Right ventricle myocardium inferior (tissue), 1 donor: ENCODE measurements at regions of chr12 and their contacts with region 1.

Region 1: DNA sequence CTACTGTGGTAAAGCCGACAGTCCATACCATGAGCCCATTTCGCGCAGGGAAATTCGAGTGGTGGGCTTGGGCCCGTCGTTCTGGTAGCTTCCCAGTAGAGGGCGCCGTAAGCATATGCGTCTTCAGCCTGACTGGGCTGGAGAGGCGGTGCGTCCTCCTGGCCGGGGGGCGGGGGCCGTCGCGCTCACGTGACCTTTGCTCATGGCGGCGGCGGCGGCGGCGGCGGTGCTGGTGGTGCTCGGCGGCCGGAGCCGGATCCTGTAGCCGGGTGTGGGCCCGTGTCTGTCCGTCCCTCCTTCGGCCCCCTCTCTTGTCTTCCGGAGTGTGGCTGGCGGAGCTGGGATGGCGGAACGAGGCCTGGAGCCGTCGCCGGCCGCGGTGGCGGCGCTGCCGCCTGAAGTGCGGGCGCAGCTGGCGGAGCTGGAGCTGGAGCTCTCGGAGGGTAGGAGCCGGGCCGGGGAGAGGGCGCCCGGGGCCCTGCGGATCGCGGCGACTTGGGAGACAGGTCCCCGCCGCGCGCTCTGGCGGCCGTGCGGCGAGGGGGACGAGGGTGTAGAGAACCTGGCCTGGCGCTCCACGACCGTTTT is at the start of gene DIP2B:
- DNase-seq: peak; percentile 99
- ATAC-seq: peak; percentile 97
- total RNA-seq, gene DIP2B: 9.4 TPM

Region 2: DNA sequence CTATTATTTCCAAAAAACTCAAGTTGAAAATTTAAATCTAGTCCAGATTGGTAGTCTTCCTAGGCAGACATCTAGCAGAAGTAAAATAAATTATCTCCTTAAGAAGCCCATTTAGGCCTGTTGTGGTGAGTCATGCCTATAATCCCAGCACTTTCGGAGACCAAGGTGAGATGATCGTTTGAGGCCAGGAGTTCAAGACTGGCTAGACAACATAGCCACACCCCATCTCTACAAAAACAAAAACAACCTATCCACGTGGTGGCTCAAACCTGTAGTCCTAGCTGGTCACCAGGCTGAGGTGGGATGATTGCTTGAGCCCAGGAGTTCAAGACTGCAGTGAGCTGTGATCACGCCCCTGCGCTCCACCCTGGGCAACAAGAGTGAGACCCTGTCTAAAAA is 85.4 kb before region 1 on chr12:
- intact Hi-C with region 1: no loop called
- DNase-seq: no peak
- ATAC-seq: no peak

Region 3: DNA sequence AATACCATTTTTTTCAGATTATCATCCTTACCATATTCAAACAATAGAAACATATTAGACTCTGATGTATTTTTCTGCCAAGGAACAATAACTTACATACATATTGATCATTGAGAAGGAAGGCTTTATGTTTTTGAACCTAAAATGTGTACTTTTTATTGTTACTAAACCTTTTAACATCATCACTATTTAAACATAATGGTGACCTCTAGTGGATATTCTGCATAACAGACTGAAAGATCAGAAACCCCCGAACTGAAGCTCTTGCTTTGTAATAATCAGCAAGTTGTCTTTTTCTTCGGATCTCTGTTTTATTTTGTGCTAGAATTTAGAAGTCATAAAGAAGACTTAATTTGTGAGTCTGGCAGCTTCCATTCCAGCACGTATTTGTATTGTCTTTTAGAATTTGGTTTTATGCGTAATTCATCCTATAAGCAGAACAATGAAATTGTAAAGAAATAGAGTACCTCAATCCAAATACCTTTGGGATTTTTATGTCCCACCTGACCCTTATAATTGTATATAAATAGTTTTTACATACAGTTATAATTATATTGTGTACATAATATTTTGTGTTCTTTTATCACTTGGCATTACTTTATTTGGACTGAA is 133.1 kb after region 1 on chr12:
- intact Hi-C with region 1: loop called (anchors 1 kb)
- DNase-seq: no peak
- ATAC-seq: no peak

Region 4: DNA sequence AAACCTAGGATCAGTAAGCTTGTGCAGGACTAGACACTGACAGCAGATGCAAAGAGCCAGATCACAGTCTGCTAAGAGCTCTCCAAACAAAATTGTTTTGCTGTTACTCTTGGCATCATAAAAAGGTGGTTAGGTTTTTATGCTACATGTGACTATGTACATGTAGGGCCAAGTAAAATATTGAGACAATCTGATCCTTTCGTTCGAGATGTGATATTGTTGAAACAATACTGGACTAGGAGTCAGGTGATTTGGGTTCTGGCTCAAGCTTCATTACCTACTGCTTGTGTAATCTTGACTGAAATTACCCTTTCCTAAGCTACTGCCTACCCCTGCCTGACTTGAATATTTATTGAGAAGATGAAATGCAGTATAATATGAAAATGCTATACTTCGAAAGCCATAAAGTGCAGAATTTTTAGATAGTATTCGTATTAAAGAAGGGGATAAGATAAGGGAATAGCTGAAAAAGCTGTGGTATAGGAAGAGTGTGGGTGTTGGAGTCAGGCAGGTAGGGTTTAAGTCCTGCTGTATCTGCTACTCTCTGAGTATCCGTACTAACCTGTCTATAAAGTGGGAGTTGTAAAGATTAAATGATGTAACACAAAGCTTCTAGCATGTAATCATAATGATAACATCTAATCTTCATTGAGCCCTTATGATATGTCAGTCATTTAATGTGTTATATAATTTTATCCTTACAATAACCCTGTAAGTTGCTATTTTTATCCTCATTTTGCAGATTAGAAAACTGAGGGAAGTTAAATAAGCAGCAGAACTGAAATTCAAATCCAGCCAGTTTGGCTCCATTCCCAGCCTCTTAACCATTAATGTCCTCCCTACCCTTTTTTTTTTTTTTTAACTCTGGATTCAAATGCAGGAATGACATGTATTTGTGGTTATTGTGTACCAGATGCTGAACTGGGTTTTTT is 220.4 kb after region 1 on chr12:
- intact Hi-C with region 1: loop called (anchors 5 kb)
- DNase-seq: no peak
- ATAC-seq: no peak